Heart left ventricle (tissue), 16 donors: ENCODE measurements at regions of chr3 and their contacts with region 1.

Region 1: DNA sequence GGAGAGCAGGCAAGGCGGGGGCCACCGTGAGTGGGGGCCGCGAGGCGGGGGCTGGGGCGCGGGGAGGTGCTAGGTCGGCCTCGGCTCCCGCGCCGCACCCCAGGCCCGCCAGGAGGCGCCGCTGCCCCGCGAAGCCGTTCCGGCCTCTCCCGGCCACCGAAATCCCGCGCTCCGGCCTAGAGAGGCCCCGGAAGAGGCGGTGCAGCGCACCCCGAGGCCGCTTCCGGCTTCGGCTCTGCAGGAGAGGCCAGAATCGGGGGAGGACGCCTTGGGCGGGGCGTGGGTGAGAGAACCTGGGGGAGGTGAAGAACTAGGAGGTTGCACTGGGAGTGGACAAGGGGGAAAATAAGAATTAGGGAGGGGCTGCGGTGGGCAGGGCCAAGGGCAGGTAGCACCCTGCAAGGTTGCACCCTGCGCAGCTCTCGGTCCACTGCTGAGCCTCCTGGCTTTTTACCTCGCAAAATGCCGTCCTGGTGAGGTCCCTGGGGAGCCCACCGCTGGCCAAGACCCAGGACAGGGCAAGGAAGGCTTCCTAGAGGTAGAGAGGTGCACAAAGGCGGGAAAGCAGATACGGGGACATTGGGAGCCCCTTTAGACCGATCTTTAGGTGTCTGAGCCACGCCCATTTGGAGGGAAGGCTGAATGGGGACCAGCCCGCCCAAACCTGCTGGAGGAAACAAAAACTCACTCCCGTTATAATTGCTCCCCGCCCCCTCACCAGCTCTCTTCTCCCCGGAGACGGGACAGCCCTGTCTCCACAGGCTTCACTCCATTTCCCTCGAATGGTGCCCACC is 8.4 kb upstream of the GNAI2 start:
- DNase-seq: peak; percentile 91 to 97 (median 93)
- ATAC-seq: peak; percentile 87 to 94 (median 92)
- H3K4me3 ChIP-seq: peak overlapping the region; percentile 49 to 91 (median 69)
- H3K27ac ChIP-seq: peak overlapping the region in 11 of 12 donors; percentile 65 to 87 (median 76)
- H3K4me1 ChIP-seq: peaks cover 4 to 54% (median 17%) of the 10 kb centered on the region in 12 donors
- H3K27me3 ChIP-seq: no peaks in the 10 kb centered on the region
- CTCF ChIP-seq: peak; percentile 72 to 98 (median 94)
- POLR2A ChIP-seq: peak in 1 of 2 donors; percentile 45

Region 2: DNA sequence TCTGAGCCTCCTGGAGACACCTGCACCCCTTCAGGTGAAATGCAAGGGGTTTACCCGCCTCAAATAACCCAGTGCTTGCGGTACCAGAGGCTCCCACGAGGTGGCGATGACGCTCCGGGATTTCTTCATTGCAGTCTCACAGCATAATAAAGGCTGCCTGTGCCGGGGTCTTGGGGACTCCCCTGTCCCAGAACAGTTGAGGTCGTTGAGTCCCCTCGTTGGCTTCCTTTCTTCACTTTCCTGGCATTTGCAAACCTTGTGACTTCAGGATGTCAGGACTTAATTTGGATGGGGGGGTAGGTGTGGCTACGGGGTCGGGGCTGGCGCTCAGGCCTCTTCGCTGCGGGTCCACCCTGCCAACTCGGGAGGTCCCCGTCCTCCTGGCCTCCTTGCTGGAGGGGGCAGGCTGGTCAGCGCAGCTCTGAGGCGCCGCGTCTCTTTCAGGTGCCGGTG is 34.9 kb before region 1 on chr3:
- intact Hi-C with region 1: loop called (anchors 1 to 2 kb)
- DNase-seq: peak in 4 of 5 donors; percentile 44 to 64 (median 60)
- ATAC-seq: peak in 2 of 4 donors; percentile 17 to 28
- H3K4me3 ChIP-seq: no peak overlapping the region
- H3K27ac ChIP-seq: no peak overlapping the region
- H3K4me1 ChIP-seq: peaks cover 3 to 29% (median 14%) of the 10 kb centered on the region in 12 donors
- H3K27me3 ChIP-seq: peaks cover 12 to 35% (median 21%) of the 10 kb centered on the region in 9 donors
- CTCF ChIP-seq: peak; percentile 82 to 94 (median 88)
- POLR2A ChIP-seq: no peak